ENCODE measurements at regions of chr2 and their contacts with region 1.

Region 1: GRCh38 chr2:218168635-218169462 is 2.1 kb upstream of the CXCR1 start:
- DNase-seq: peak; percentile 89
- ATAC-seq: peak; percentile 78
- H3K4me3 Mint-ChIP-seq: no peak overlapping the region
- H3K27ac Mint-ChIP-seq: no peak overlapping the region
- H3K4me1 Mint-ChIP-seq: peaks cover 19% of the 10 kb centered on the region
- H3K27me3 Mint-ChIP-seq: peaks cover 2% of the 10 kb centered on the region
- CTCF ChIP-seq: peak; percentile 76

Region 2: DNA sequence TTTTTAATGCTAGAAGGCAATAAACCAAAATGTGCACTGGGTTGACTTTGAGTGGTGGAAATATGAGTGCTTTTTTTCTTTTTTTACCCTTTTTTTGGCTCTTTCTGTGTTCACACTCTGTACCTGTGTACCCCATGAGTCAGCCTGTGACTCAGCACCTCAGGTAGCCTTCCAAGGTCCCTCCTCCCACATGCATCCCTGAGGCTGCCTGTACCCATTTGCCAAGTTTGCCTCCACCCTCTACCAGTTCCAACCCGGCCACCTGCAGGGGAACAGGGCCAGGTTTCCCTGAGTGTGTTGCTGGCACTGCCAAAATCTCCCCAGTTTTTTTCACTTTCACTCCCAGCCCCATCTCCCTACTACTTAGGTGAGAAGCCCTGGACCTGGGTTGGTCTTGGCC is 16.1 kb before region 1 on chr2:
- CTCF ChIA-PET with region 1: interaction called, 16 read pairs
- POLR2A ChIA-PET with region 1: no interaction called
- intact Hi-C with region 1: no loop called
- DNase-seq: no peak
- ATAC-seq: no peak
- H3K4me3 Mint-ChIP-seq: no peak overlapping the region
- H3K27ac Mint-ChIP-seq: no peak overlapping the region
- H3K4me1 Mint-ChIP-seq: no peaks in the 10 kb centered on the region
- H3K27me3 Mint-ChIP-seq: no peaks in the 10 kb centered on the region
- CTCF ChIP-seq: no peak

Region 3: DNA sequence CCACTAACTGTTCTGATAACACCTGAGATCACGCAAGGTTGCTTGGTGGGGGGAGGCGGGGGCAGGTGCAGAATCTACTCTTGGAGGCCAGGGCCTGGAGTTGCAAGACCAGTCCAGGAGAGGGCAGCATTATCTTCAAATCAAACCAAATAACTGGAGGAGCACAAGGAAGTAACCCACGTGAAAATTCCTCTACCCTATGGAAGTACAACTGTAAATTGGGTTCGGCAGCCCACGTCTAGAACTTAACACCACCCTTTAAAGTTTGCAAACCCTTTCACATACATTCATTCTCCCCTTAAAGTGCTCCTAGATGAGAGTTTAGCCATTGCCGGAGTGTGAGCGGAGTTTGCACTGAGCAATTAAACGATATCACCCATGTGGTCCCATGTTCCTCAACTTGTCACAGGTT is 17.5 kb after region 1 on chr2:
- CTCF ChIA-PET with region 1: interaction called, 23 read pairs
- POLR2A ChIA-PET with region 1: no interaction called
- intact Hi-C with region 1: no loop called
- DNase-seq: peak; percentile 89
- ATAC-seq: peak; percentile 98
- H3K4me3 Mint-ChIP-seq: no peak overlapping the region
- H3K27ac Mint-ChIP-seq: peak overlapping the region; percentile 55
- H3K4me1 Mint-ChIP-seq: peaks cover 9% of the 10 kb centered on the region
- H3K27me3 Mint-ChIP-seq: no peaks in the 10 kb centered on the region
- CTCF ChIP-seq: peak; percentile 86

Measured in activated CD8-positive, alpha-beta T cell treated with anti-CD3 and anti-CD28 coated beads for 36 hours (primary cell).